Left ventricle myocardium superior (tissue), 1 donor: ENCODE measurements at regions of chr6 and their contacts with region 1.

Region 1: DNA sequence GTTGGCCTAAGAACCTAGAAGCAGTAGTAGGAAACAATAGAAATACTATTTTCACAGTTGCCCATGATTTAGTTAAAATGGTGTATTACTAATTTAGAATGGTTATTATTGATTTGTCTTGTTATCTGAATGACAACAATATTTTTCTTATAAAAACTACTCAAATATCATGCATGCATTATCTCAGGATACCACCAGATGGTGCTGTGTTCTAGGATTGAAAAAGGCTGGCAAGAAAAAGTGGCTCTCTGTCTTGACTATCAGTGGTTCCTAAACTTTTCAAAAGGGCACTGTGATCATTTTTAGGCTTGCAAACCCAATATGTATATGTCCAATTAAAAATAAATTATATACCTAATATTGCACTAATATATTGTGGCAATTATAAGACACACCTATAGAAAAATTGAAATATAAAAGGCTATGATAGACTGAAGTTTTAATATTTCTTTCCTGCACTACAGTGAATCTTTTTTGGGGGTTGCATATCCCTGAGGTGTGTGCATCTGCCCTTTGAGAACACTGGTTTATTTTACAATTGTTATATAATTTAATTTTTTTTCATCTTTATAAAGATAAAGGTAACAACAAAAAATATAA is 131.7 kb upstream of the MLIP start:
- DNase-seq: no peak
- ATAC-seq: no peak

Region 2: DNA sequence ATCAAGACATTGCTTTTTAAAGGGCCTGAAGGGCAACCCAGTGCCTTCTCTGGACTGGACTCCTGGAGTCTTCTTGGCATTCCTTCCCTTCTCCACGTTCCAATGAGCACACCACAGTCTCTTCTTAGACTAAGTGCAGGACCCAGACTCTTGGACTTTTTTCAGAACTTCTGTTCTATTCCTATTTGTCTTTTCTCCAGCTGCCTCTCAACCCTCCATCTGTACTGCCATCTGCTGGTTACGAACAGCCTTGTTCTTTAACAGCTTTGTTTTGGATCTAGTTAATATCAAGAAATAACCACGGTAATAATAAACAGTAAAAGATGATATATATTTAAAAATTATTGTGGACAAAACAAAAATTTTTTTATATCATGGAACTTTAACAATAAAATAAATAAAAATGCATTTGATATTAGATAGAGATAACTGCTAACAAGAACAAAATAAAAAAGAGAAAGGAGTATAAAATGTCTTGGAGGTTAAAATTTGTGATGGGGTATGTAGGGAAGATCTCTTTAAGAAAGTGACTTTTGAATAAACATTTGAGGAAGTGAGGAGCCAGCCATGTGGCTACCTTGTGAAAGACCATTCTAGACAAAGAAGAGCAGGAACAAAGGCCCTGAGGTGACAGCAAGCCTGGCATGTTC is 1089.7 kb after region 1 on chr6:
- intact Hi-C with region 1: loop called (anchors 5 kb)
- DNase-seq: no peak
- ATAC-seq: peak; percentile 27

Region 3: DNA sequence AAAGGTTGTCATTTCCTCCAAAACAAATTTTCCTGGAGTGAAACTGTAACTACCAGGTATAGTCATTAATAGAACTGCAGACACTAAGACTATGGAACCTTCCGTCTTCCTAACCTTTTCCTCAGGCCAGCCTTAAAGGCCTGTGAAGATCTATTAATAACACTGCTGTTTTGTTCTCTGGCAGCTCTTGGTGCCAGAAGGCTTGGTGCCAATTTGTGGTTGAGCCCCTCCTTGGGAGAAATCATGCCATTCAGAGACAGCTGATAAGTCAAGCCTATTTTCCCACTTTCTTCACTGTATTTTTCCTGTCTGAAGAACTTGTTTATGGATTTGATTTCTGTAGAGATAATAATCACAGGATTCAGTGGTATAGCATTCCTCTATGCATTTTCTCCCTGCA is 1259.5 kb after region 1 on chr6:
- intact Hi-C with region 1: loop called (anchors 10 kb)
- DNase-seq: peak; percentile 30
- ATAC-seq: peak; percentile 28